Posterior vena cava (tissue), 2 donors: ENCODE measurements at regions of chr20 and their contacts with region 1.

Region 1: DNA sequence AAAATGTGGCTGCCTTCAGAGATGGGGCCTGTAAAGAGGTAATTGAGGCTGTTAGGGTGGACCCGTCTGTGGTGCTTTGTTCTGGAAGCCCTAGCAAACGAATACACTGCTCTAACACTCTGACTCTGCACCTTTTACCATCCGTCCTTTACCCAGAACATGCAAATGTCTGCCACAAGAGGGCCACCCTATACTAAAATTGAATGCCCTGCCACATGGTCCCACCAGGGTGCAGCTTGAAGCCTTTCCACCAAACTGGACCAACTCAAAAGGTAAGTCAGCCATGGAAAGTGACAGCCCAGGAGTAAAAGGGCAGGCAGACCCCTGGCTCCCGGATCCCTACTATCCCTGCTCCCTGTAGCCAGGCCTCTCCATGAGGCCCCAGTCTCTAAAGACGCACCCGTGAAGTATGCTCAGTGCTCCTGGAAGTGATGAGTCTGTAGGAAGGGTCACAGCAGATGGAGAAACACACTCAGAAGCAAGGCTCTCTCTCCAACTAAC is 5.8 kb upstream of the BFSP1 start:
- DNase-seq: no peak

Region 2: GRCh38 chr20:15857173-15857784 is 1679.7 kb before region 1 on chr20:
- intact Hi-C with region 1: no loop called
- DNase-seq: no peak

Region 3: GRCh38 chr20:17569616-17570346 is 32.8 kb after region 1 on chr20 and contains the start of gene DSTN:
- intact Hi-C with region 1: loop called in 1 of 2 experiments (anchors 5 kb)
- DNase-seq: peak; percentile 98
- total RNA-seq, gene DSTN: 1,245 to 1,338 TPM

Region 4: DNA sequence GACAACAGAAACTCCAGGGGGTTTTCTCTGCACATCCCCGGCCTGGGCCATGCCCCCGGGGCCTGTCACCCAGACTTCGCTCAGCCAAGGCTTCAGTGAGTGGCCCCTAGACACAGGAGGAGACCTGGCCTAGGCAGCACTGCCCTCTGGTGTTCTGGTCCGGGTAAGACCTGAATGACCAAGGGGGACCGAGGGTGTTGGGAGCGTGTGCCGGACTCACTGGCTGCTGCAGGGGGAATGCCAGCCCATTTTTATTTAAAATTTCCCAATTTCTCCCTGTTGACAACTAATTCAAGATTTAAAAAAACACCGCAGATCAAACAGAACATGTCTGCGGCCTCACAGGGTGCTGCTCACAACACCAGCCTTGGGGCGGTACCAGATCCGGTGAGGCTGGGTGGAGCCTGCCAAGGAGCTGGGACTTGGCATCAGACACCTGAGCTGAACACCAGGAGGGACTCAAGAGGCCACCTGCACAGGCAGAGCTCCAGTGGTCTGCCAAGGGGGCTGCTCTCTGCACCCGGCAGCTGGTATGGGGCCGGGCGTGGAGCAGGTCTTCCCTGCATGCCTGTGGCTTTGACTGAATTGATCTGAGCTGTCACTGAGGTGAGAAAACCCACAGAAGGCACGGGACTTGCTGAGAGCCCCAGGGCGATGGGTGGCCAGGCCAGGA is 80.7 kb after region 1 on chr20:
- intact Hi-C with region 1: loop called (anchors 2 to 5 kb)
- DNase-seq: peak; percentile 86

Region 5: GRCh38 chr20:17825960-17826843 is 289.2 kb after region 1 on chr20:
- intact Hi-C with region 1: no loop called
- DNase-seq: peak; percentile 30

Region 6: DNA sequence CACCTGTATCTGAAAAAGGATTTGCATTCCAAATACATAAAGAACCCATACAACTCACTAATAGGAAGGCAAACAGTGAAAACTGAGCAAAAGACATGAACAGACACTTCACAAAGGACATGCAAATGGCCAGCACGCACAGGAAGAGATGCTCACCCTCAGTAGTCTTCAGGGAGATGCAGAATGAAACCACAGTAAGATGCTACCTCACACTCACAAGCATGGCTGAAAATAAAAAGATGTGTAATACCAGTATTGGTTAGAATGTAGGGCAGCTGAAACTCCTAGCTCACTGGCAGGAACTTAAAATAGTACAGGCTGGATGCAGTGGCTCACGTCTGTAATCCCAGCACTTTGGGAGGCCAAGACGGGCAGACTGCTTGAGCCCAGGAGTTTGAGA is 367.0 kb after region 1 on chr20:
- intact Hi-C with region 1: loop called in 1 of 2 experiments (anchors 10 kb)
- DNase-seq: no peak